ENCODE measurements at regions of chr7 and their contacts with region 1.

Region 1: DNA sequence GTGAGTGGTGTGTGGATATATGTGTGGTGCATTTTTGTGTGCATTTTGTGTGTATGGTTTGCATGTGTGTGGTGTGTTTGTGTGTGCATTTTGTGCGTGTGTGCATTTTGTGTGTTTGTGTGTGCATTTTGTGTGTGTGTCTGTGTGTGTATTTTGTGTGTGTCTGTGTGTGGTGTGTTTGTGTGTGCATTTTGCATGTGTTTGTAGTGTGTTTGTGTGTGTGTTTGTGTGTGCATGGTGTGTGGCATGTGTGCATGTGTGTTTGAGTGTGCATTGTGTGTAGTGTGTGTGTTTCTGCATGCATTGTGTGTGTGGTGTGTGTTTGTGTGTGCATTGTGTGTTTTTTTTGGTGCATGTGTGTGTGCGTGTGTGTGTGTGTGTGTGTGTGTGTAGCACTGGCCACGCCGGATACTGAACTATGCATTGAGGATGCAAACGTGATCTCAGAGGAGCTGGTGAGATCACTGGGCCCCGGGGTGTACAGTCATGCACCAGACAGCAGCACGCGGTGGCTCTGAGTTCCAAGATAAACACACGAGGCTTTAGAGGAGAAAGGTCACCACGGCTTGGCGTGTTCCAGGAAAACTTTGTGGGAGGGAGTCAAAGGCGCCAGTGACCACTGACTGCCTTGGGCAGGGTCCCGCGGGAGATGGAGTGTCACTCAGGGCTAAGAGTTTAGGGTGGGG is 106.6 kb upstream of the SHH start:
- DNase-seq: peak; percentile 66
- ATAC-seq: peak; percentile 83
- H3K4me3 ChIP-seq: peak overlapping the region in 1 of 3 experiments; percentile 35; a peak in 1 of 6 replicates
- H3K27ac ChIP-seq: no peak overlapping the region
- H3K4me1 ChIP-seq: peaks cover 16% of the 10 kb centered on the region
- H3K27me3 ChIP-seq: peaks cover 2 to 59% of the 10 kb centered on the region in 2 experiments; a peak in 4 of 5 replicates
- CTCF ChIP-seq: no peak; the same call in 1 of the 2 replicates
- EP300 ChIP-seq: peak in 1 of 2 experiments; percentile 40; a peak in 1 of 4 replicates
- POLR2A ChIP-seq: no peak
- RAD21 ChIP-seq: no peak

Region 2: GRCh38 chr7:155896531-155897263 is 22.2 kb before region 1 on chr7:
- CTCF ChIA-PET with region 1: no interaction called
- POLR2A ChIA-PET with region 1: no interaction called
- in situ Hi-C with region 1: no loop called
- intact Hi-C with region 1: no loop called
- DNase-seq: no peak
- ATAC-seq: no peak
- H3K4me3 ChIP-seq: no peak overlapping the region
- H3K27ac ChIP-seq: no peak overlapping the region
- H3K4me1 ChIP-seq: no peaks in the 10 kb centered on the region
- H3K27me3 ChIP-seq: peaks cover 2 to 49% of the 10 kb centered on the region in 2 experiments; a peak in 4 of 5 replicates
- CTCF ChIP-seq: no peak
- EP300 ChIP-seq: no peak
- POLR2A ChIP-seq: no peak
- RAD21 ChIP-seq: no peak

Region 3: DNA sequence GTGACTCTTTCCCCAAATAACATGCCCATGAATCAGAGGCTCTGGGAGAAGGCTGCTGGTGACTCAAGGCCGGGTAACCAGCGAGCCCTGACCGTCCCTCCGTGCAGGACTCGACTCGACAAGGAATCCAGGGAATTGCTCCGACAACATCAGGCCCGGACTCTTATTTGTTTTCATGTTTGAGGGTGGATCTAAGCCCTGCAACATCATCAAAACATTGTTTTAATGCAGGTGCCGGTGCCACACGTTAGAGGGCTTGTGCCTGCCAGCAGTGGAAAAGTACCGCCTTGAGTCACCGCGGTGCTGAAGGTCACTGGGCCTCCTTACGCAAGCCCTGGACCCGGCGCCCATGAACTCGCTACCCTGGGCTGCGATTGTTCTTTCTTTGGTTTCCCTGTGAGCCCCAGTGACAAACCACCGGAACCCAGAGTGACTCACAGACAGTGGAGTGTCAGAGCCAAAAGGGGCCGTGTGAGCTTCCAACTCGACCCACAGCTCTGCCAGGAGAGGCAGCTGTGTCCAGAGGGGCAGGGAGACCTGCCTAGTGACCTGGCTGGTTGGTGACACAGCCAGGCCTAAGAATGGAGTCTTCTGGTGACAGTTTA is 32.8 kb after region 1 on chr7:
- CTCF ChIA-PET with region 1: no interaction called
- POLR2A ChIA-PET with region 1: interaction called, 3 read pairs
- in situ Hi-C with region 1: no loop called
- intact Hi-C with region 1: loop called (anchors 1 kb)
- DNase-seq: peak; percentile 97
- ATAC-seq: peak; percentile 89
- H3K4me3 ChIP-seq: peak overlapping the region; percentile 38 to 70 (median 47); a peak in 5 of 6 replicates
- H3K27ac ChIP-seq: peak overlapping the region; percentile 88
- H3K4me1 ChIP-seq: peaks cover 60% of the 10 kb centered on the region
- H3K27me3 ChIP-seq: 0 out of 5 replicates have a peak, but pooled peaks cover 0 to 10% of the 10 kb centered on the region in 2 experiments
- CTCF ChIP-seq: no peak; the same call in 1 of the 2 replicates
- EP300 ChIP-seq: peak; percentile 87 to 95
- POLR2A ChIP-seq: peak; percentile 80 to 92; a peak in 3 of 4 replicates
- RAD21 ChIP-seq: peak; percentile 9; the same call in 1 of the 2 replicates

Region 4: DNA sequence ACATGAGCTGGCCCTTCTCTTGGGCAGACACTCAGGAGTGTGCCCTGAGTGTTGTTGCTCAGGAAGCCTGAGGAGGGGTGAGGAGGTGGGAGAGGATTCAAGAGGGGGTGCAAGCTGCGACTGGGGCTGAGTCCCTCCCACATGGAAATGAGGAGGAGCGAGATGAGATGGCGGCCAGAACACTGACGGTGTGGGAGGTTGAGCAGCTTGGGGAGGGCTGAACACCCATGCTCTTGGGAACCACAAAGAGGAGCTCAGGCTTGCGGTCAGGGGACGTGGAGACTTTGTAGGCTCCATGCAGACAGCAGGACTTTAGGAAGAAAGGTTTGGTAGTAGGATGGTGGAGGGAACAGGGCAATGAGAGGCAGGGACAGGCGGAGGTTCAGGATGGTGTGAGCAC is 56.6 kb after region 1 on chr7:
- CTCF ChIA-PET with region 1: no interaction called
- POLR2A ChIA-PET with region 1: no interaction called
- in situ Hi-C with region 1: no loop called
- intact Hi-C with region 1: loop called (anchors 10 kb)
- DNase-seq: no peak
- ATAC-seq: no peak
- H3K4me3 ChIP-seq: no peak overlapping the region
- H3K27ac ChIP-seq: no peak overlapping the region
- H3K4me1 ChIP-seq: no peaks in the 10 kb centered on the region
- H3K27me3 ChIP-seq: peaks cover 14 to 66% of the 10 kb centered on the region in 2 experiments
- CTCF ChIP-seq: no peak
- EP300 ChIP-seq: no peak
- POLR2A ChIP-seq: no peak
- RAD21 ChIP-seq: no peak

Region 5: DNA sequence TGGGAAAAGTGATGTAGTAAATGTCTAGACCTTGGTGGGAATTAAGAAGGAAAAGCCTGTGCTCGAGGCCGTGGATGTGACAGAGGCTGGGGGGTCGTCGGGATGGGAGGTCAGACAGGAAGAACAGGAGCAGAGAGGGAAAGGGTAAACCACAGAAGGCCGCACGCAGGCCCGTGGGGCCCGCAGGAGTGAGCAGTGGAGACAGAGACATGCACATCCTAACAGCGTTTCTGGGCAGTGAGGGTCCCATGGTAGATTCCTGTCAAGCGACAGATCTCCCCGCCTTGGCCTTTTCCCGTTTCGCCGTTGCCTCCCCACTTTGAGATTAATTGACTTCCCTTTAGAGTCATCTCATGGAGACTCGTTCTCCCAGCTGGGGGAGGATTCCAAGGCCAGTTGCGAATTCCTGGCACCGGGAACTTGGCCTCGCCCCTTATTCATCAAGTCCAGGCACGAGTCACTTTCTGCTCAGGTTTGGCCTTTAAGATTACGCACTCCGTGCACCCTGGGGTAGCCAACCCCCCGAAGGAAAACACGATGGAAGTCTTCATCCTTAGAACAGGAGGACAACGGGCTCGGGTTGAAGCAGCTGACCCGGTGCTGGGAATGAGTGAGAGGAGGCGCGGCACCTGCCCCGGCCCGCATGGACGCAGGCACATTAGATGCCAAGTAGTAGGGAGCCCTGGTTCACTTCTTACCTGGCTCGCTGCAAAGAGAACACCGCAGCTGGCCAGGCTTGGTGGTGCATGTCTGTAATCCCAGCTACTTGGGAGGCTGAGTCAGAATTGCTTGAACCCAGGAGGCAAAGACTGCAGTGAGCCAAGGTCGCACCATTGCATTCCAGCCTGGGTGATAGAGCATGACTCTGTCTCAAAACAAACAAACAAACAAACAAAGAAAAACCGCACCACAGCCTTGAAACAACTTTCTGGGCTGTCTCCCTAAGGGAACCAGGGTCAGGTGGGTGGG is 208.6 kb after region 1 on chr7:
- CTCF ChIA-PET with region 1: no interaction called
- POLR2A ChIA-PET with region 1: no interaction called
- in situ Hi-C with region 1: no loop called
- intact Hi-C with region 1: no loop called
- DNase-seq: no peak
- ATAC-seq: no peak
- H3K4me3 ChIP-seq: no peak overlapping the region
- H3K27ac ChIP-seq: no peak overlapping the region
- H3K4me1 ChIP-seq: 0 out of 2 replicates have a peak, but pooled peaks cover 4% of the 10 kb centered on the region
- H3K27me3 ChIP-seq: peaks cover 6 to 72% of the 10 kb centered on the region in 2 experiments
- CTCF ChIP-seq: no peak
- EP300 ChIP-seq: no peak
- POLR2A ChIP-seq: no peak
- RAD21 ChIP-seq: no peak

Measured in HepG2 (cell line).